PC-9 (cell line): ENCODE measurements at regions of chr11 and their contacts with region 1.

Region 1: DNA sequence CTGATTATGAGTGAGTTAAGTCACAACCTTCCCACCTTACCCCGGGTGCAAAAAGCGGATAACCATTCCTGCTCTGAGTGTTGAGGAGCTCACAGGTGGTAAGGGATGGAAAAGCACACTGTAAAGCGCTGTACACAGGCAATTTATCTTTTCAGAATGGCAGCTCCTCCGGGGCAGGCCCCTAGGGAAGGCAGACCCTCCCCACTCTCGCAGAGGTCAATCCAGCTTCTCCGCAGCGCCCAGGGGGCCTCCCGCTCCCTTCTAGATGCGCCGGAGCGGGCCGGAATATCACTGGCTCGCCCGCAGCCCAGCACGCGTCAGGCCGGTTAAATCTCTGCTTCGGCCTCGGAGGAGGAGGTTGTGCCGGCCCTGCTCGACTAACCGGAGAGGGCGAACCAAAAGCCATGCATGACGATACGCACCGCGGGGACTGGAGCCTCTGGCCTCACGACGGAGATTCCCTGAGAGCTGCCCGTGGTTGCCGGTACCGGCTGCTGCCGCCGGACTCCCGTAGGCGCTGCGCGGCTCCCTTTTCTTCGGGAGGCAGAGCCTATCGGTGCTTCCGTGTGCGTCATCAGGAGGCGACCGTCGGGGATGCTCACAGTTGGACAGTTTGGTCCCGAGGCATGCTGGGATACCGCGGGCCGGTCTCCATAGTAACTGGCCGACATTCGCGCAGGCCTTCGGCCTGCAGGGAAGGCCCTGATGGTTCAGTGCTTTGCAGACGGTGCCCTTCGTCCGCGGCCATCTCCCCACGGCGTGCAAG is at the start of gene BRMS1:
- DNase-seq: peak; percentile 94
- H3K4me3 ChIP-seq: peak within 1 kb of the TSS; percentile 100
- H3K27ac ChIP-seq: peak within 1 kb of the TSS; percentile 11; the same call in 1 of the 2 replicates
- H3K4me1 ChIP-seq: peaks cover 34% of the 10 kb centered on the region
- H3K27me3 ChIP-seq: no peaks in the 10 kb centered on the region
- CTCF ChIP-seq: no peak
- total RNA-seq, gene BRMS1: 43.2 and 54.3 TPM in 2 replicates

Region 2: DNA sequence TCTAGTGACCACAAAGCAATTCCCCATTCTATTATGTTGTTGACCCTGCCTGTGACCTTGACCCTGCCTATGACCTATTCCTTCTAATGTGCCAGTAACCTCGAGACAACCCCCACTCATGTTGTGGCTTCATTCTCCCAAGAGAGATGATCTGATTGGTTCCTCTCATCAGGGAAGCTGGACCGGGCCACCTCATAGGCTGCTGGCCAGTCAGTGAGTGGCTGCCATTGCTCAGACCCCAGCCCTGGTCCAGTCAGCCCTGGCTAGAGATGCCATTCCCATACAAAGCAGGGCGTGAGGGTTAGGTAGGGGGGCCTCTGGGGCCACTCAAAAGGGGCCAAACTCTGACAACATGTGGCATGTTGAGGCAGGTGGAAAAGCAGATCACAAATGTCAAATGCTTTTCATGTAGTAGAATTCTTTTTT is 14.9 kb after region 1 on chr11:
- CTCF ChIA-PET with region 1: interaction called, 4 read pairs
- POLR2A ChIA-PET with region 1: interaction called, 11 read pairs
- intact Hi-C with region 1: no loop called
- DNase-seq: no peak
- H3K4me3 ChIP-seq: no peak overlapping the region
- H3K27ac ChIP-seq: no peak overlapping the region
- H3K4me1 ChIP-seq: no peaks in the 10 kb centered on the region
- H3K27me3 ChIP-seq: no peaks in the 10 kb centered on the region
- CTCF ChIP-seq: no peak

Region 3: DNA sequence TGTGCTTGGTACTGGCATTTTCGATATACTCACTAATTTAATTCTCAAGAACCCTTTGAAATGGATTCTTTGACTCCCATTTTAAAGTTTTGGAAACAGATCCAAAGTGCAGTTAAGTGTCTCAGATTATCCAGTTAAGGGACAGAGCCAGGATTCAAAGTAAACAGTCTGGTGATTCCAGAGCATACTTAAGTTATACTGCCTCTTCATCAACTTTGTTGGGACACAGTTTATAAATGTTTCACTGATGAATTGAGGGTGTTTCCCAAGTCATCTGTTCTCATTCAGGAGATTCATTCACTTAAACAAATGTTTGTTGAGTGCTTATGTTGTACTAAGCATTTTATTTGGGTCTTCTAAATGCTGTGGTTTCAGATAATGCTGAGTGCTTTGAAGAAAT is 791.4 kb after region 1 on chr11:
- CTCF ChIA-PET with region 1: no interaction called
- POLR2A ChIA-PET with region 1: no interaction called
- intact Hi-C with region 1: no loop called
- DNase-seq: no peak
- H3K4me3 ChIP-seq: no peak overlapping the region
- H3K27ac ChIP-seq: no peak overlapping the region
- H3K4me1 ChIP-seq: no peaks in the 10 kb centered on the region
- H3K27me3 ChIP-seq: no peaks in the 10 kb centered on the region
- CTCF ChIP-seq: no peak